ENCODE measurements at regions of chr4 and their contacts with region 1.

Region 1: DNA sequence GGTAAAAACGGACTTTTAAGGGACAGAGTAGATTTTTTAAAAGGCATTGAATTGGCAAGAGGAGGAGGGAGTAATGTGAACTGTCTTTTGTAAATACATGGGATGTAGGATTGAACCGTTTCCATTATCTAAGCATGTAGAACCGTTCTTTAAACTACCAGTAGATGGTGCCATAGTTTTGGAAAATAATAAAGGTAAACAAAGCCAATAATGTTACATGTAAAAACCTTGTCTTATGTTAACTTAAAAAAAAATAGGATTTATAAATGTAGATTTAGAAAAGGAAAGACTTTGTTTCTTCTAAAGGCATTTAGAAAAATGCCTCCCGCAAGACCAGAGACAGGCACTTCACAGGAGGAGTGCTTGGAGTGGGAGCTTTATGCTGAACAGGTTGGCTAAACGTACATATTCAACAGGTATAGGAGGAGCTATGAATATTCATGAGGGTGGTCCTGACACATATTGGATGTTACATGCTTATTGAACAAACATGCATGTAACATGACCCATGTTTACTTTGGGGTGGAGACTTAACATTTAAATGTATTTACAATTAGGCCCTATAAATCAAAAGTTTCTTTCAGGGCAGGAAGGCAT is 45.5 kb upstream of the FAM241A start:
- DNase-seq: peak; percentile 22 to 47
- ATAC-seq: peak; percentile 90 to 94
- H3K4me3 ChIP-seq: no peak overlapping the region
- H3K27ac ChIP-seq: no peak overlapping the region
- H3K4me1 ChIP-seq: peaks cover 3% of the 10 kb centered on the region; the same call in 2 of the 3 replicates
- CTCF ChIP-seq: peak; percentile 77
- EP300 ChIP-seq: no peak
- POLR2A ChIP-seq: no peak
- RAD21 ChIP-seq: peak; percentile 86

Region 2: DNA sequence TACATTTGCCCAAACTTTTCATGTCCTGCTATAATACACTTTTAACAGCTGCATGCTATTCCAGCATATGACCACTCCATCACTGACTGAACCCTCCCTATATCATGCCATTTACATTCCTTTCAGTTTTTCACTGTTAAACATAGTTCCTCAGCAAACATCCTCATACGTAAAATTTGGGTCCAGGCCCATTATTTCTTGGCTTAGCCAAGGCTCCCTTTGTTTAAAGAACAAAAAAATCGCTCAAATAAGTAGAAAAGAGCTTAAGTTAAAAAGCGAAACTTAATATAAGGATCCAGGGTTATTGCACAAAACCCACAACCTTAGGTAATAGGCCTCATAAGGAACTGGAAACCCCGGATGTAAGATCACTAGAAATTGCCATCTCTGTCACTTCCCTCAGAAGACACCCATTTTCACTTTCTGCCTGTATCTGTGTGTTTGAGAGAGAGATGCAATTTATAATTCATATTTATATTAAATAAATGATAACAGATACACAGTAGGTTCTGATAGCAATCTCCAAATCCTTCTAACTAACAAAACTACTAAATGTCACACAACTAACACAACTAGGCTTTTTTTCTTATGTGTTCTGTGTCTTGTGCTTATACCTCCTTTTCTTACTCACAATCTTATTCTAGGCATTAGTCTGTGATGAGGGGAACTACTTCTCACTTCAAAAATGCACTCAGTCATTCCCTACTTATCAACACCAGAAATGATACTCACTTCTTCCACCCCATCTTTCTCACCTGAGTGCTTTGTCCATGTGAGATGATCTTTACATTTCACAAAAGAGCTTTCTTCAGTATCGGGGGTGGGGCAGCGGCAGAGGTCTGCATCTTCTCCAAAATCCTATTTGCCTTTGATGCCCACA is 14.4 kb before region 1 on chr4:
- CTCF ChIA-PET with region 1: no interaction called
- POLR2A ChIA-PET with region 1: no interaction called
- DNase-seq: peak in 1 of 2 experiments; percentile 12
- ATAC-seq: no peak
- H3K4me3 ChIP-seq: no peak overlapping the region
- H3K27ac ChIP-seq: peak overlapping the region; percentile 65 to 74; a peak in 4 of 6 replicates
- H3K4me1 ChIP-seq: peaks cover 40% of the 10 kb centered on the region
- CTCF ChIP-seq: no peak
- EP300 ChIP-seq: no peak
- POLR2A ChIP-seq: no peak
- RAD21 ChIP-seq: no peak

Region 3: DNA sequence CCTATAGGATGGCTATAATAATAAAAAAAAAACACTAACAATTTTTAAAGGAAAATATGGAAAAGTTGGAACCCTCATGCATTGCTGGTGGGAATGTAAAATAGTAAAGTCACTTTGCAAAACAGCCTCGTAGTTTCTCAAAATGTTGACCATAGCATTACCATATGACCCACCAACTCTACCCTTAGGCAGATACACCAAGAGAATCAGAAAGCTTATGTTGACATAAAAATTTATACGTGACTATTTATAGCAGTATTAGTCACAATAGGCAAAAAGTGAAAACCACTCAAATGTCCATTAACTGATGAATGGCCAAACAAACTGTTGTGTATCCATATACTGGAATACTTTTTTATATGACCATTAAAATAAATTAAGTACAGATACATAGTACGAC is 25.6 kb after region 1 on chr4:
- CTCF ChIA-PET with region 1: interaction called, 10 read pairs
- POLR2A ChIA-PET with region 1: no interaction called
- DNase-seq: no peak
- ATAC-seq: no peak
- H3K4me3 ChIP-seq: no peak overlapping the region
- H3K27ac ChIP-seq: no peak overlapping the region
- H3K4me1 ChIP-seq: 0 out of 3 replicates have a peak, but pooled peaks cover 8% of the 10 kb centered on the region
- CTCF ChIP-seq: no peak
- EP300 ChIP-seq: no peak
- POLR2A ChIP-seq: no peak
- RAD21 ChIP-seq: no peak

Region 4: GRCh38 chr4:112189754-112190153 is 90.0 kb after region 1 on chr4:
- CTCF ChIA-PET with region 1: interaction called, 23 read pairs
- POLR2A ChIA-PET with region 1: no interaction called
- DNase-seq: peak in 1 of 2 experiments; percentile 26
- ATAC-seq: peak in 1 of 2 experiments; percentile 54; a peak in 1 of 6 replicates
- H3K4me3 ChIP-seq: no peak overlapping the region
- H3K27ac ChIP-seq: no peak overlapping the region
- H3K4me1 ChIP-seq: no peaks in the 10 kb centered on the region
- CTCF ChIP-seq: peak; percentile 35
- EP300 ChIP-seq: no peak
- POLR2A ChIP-seq: no peak
- RAD21 ChIP-seq: peak; percentile 45 to 55

Region 5: GRCh38 chr4:112231779-112232713 is 132.2 kb after region 1 on chr4 and contains the start of gene AP1AR:
- CTCF ChIA-PET with region 1: interaction called, 128 read pairs
- POLR2A ChIA-PET with region 1: interaction called, 7 read pairs
- DNase-seq: peak; percentile 66
- ATAC-seq: peak; percentile 83 to 88
- H3K4me3 ChIP-seq: peak within 1 kb of the TSS; percentile 95
- H3K27ac ChIP-seq: peak within 1 kb of the TSS; percentile 94 to 96
- H3K4me1 ChIP-seq: peaks cover 28% of the 10 kb centered on the region; the same call in 2 of the 3 replicates
- CTCF ChIP-seq: no peak; the same call in 2 of the 3 replicates
- EP300 ChIP-seq: no peak
- POLR2A ChIP-seq: peak; percentile 83
- RAD21 ChIP-seq: no peak
- polyA plus RNA-seq, gene AP1AR: 21.1 and 34.6 TPM in 2 replicates

Region 6: GRCh38 chr4:112266821-112267220 is 167.0 kb after region 1 on chr4:
- CTCF ChIA-PET with region 1: interaction called, 10 read pairs
- POLR2A ChIA-PET with region 1: interaction called, 4 read pairs
- DNase-seq: peak in 1 of 2 experiments; percentile 26
- ATAC-seq: peak in 1 of 2 experiments; percentile 63; a peak in 2 of 6 replicates
- H3K4me3 ChIP-seq: no peak overlapping the region
- H3K27ac ChIP-seq: no peak overlapping the region
- H3K4me1 ChIP-seq: peaks cover 8% of the 10 kb centered on the region; the same call in 1 of the 3 replicates
- CTCF ChIP-seq: peak; percentile 50
- EP300 ChIP-seq: no peak
- POLR2A ChIP-seq: no peak
- RAD21 ChIP-seq: peak; percentile 25 to 36; a peak in 2 of 5 replicates